ENCODE measurements at regions of chr6 and their contacts with region 1.

Region 1: GRCh38 chr6:26342106-26343004 is 22.6 kb upstream of the BTN3A2 start:
- DNase-seq: no peak
- ATAC-seq: no peak
- H3K4me3 ChIP-seq: peak overlapping the region in 1 of 12 donors; percentile 33
- H3K27ac ChIP-seq: no peak overlapping the region
- H3K4me1 ChIP-seq: peaks cover 0 to 5% (median 0%) of the 10 kb centered on the region in 12 donors
- H3K27me3 ChIP-seq: peaks cover 0 to 39% (median 15%) of the 10 kb centered on the region in 9 donors
- CTCF ChIP-seq: no peak
- POLR2A ChIP-seq: no peak

Region 2: GRCh38 chr6:26532699-26533531 is 190.6 kb after region 1 on chr6:
- intact Hi-C with region 1: loop called in 1 of 10 experiments (anchors 5 kb)
- DNase-seq: peak; percentile 81 to 89 (median 87)
- ATAC-seq: peak; percentile 40 to 80 (median 64)
- H3K4me3 ChIP-seq: peak overlapping the region; percentile 52 to 79 (median 68)
- H3K27ac ChIP-seq: peak overlapping the region in 11 of 12 donors; percentile 58 to 88 (median 78)
- H3K4me1 ChIP-seq: peaks cover 0 to 37% (median 15%) of the 10 kb centered on the region in 12 donors
- H3K27me3 ChIP-seq: no peaks in the 10 kb centered on the region
- CTCF ChIP-seq: no peak
- POLR2A ChIP-seq: no peak

Region 3: GRCh38 chr6:27073441-27073840 is 731.1 kb after region 1 on chr6:
- intact Hi-C with region 1: loop called in 3 of 10 experiments (anchors 5 kb)
- DNase-seq: no peak
- ATAC-seq: no peak
- H3K4me3 ChIP-seq: no peak overlapping the region
- H3K27ac ChIP-seq: no peak overlapping the region
- H3K4me1 ChIP-seq: no peaks in the 10 kb centered on the region
- H3K27me3 ChIP-seq: peaks cover 0 to 57% (median 8%) of the 10 kb centered on the region in 9 donors
- CTCF ChIP-seq: no peak
- POLR2A ChIP-seq: no peak

Region 4: DNA sequence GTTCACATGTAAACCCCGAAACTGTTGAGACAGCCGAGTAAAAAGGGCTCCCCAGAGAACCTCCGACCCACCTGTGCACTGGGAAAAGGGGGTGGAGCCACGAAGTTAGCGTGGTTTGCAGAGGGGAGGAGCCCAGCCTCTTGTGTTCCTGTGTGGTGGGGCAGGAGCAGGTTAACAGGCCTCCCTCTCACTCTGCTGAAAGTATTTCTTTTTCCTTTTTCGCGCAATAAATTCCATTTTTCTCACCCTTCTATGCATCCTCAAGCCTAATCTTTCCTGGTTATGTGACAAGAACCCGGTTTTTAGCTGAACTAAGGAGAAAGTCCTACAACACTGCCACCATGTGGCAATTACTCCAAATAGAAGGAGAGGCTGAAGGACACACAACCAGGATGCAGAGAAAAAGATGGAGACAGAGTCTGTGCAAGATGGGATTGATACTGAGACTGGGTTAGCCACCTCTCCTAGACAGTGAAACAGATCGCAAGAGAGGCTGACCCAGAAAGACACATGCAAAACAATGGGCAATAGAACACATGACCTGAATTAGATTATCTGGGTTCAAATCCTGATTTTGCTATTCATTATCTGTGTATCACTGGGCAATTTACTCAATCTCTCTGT is 736.5 kb after region 1 on chr6:
- intact Hi-C with region 1: loop called in 3 of 10 experiments (anchors 5 kb)
- DNase-seq: peak in 1 of 5 donors; percentile 18
- ATAC-seq: peak in 2 of 4 donors; percentile 66 to 68
- H3K4me3 ChIP-seq: peak overlapping the region in 1 of 12 donors; percentile 8
- H3K27ac ChIP-seq: no peak overlapping the region
- H3K4me1 ChIP-seq: peaks cover 0 to 4% (median 0%) of the 10 kb centered on the region in 12 donors
- H3K27me3 ChIP-seq: peaks cover 0 to 69% (median 17%) of the 10 kb centered on the region in 9 donors
- CTCF ChIP-seq: peak; percentile 42 to 71 (median 58)
- POLR2A ChIP-seq: no peak